ENCODE measurements at regions of chr7 and their contacts with region 1.

Region 1: GRCh38 chr7:158811461-158811860 is 17.8 kb downstream of the ESYT2 start:
- DNase-seq: no peak
- H3K4me3 ChIP-seq: peak overlapping the region; percentile 38
- H3K4me3 Mint-ChIP-seq: peak overlapping the region; percentile 38 to 87 (median 62)
- H3K27ac ChIP-seq: no peak overlapping the region
- H3K27ac Mint-ChIP-seq: peak overlapping the region; percentile 38 to 97 (median 87)
- H3K4me1 ChIP-seq: peaks cover 69% of the 10 kb centered on the region
- H3K4me1 Mint-ChIP-seq: peaks cover 71 to 90% (median 83%) of the 10 kb centered on the region in 3 donors
- H3K27me3 ChIP-seq: no peaks in the 10 kb centered on the region
- H3K27me3 Mint-ChIP-seq: no peaks in the 10 kb centered on the region

Region 2: GRCh38 chr7:158824028-158824427 is 12.6 kb after region 1 on chr7:
- CTCF ChIA-PET with region 1: interaction called, 9 read pairs
- POLR2A ChIA-PET with region 1: interaction called, 13 read pairs
- DNase-seq: peak; percentile 52 to 86 (median 73)
- H3K4me3 ChIP-seq: no peak overlapping the region
- H3K4me3 Mint-ChIP-seq: peak overlapping the region; percentile 31 to 86 (median 67)
- H3K27ac ChIP-seq: no peak overlapping the region
- H3K27ac Mint-ChIP-seq: peak overlapping the region; percentile 54 to 91 (median 82)
- H3K4me1 ChIP-seq: peaks cover 66% of the 10 kb centered on the region
- H3K4me1 Mint-ChIP-seq: peaks cover 65 to 79% (median 76%) of the 10 kb centered on the region in 3 donors
- H3K27me3 ChIP-seq: no peaks in the 10 kb centered on the region
- H3K27me3 Mint-ChIP-seq: peaks cover 0 to 5% of the 10 kb centered on the region in 2 donors

Region 3: GRCh38 chr7:159049266-159050025 is 238.0 kb after region 1 on chr7:
- CTCF ChIA-PET with region 1: no interaction called
- POLR2A ChIA-PET with region 1: no interaction called
- DNase-seq: no peak
- H3K4me3 ChIP-seq: no peak overlapping the region
- H3K4me3 Mint-ChIP-seq: no peak overlapping the region
- H3K27ac ChIP-seq: no peak overlapping the region
- H3K27ac Mint-ChIP-seq: no peak overlapping the region
- H3K4me1 ChIP-seq: no peaks in the 10 kb centered on the region
- H3K4me1 Mint-ChIP-seq: no peaks in the 10 kb centered on the region
- H3K27me3 ChIP-seq: no peaks in the 10 kb centered on the region
- H3K27me3 Mint-ChIP-seq: peaks cover 15 to 36% of the 10 kb centered on the region in 2 donors